ENCODE measurements at regions of chr9 and their contacts with region 1.

Region 1: DNA sequence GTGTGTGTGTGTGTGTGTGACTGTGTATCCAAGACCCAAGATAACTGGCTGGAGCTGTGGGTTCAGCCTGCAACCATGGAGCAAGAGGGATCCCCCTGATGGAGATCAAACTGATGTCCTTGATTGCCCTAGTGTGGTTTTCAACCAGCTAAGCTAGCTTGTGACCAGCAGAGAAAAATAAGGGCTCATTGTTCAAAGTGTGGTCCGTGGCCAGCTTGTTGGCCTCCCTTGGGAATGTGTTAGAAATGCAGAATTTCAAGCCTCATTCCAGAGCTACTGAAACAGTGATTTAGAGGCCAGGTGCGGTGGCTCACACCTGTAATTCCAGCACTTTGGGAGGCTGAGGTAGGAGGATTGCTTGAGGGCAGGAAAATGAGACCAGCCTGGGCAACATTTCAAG is 79.9 kb downstream of the ACER2 start:
- DNase-seq: no peak
- CTCF ChIP-seq: no peak

Region 2: DNA sequence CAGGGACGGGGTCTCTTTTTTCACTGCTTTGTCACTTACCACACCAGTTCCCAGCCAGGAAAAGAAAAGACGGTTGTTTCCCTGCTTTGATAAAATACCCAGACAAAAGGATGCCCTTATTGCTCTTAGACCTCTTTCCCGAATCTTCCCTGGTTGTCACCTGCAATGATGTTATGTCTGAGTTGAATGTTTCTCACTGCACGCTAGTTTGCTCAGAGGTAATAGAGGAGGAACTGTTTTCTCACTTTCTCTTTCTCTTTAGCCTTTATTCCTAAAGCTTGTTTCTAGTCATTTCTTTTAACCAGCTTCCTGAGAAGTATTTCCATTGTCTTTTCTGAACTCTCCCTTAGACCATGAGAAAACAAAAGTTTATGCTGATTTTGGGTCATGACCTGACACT is 47.0 kb before region 1 on chr9:
- CTCF ChIA-PET with region 1: no interaction called
- POLR2A ChIA-PET with region 1: no interaction called
- DNase-seq: peak; percentile 65
- CTCF ChIP-seq: no peak

Region 3: DNA sequence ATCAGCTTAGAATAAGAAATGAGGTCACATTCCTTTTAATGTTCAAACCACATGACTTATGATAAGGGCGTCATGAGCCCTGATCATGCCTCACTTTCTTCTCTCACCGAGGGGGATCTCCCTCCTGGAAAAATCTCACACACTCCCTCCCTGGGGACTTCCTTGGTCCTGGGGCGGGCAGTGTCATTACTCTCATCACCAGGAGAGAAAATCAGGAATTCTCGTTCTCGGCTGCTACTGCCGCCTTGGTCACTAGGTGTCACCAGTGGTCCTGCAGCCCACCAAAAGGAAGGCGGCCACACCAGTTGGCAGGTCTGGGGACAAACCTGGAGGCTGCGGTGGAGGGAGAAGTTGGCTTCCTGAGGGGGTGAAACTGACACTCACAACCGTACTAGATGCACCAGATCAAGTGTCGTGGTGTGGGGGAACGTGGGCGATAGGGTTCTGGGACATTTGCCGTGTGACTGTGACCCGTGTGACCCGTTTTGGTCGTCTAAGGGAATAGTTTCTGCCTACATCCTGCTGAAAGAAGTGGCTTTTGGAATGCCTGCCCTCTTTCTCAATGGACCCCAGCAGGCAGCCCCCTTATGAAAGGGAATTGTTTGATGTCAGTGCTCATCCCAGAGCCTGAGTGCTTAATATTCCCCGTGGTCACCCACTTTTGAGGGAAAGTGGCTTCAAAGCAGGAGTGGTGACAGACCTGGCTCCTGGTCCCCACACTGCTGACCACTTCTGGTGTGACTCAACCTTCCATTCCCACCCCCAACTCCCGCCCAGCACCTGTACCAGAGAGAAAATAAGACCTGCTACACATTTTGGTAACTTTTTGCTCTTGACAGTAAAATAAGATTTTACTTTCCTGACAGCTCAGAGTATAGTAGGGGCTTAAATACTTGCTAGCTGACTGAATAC is 16.7 kb before region 1 on chr9:
- CTCF ChIA-PET with region 1: interaction called, 14 read pairs
- POLR2A ChIA-PET with region 1: no interaction called
- DNase-seq: peak; percentile 70
- CTCF ChIP-seq: peak; percentile 79